A549 (cell line): ENCODE measurements at regions of chr1 and their contacts with region 1.

Region 1: GRCh38 chr1:156383023-156383422 is 14.0 kb downstream of the RHBG start:
- DNase-seq: peak; percentile 75 to 88
- ATAC-seq: peak; percentile 90 to 95
- H3K4me3 ChIP-seq: no peak overlapping the region
- H3K27ac ChIP-seq: 0 out of 6 replicates have a peak overlapping the region, but pooled peaks of 1 of the 2 experiments have one; percentile 47
- H3K4me1 ChIP-seq: peaks cover 8% of the 10 kb centered on the region
- CTCF ChIP-seq: peak; percentile 76
- EP300 ChIP-seq: no peak
- POLR2A ChIP-seq: no peak
- RAD21 ChIP-seq: peak; percentile 85 to 92

Region 2: GRCh38 chr1:156356875-156357534 is 26.0 kb before region 1 on chr1:
- CTCF ChIA-PET with region 1: interaction called, 399 read pairs
- POLR2A ChIA-PET with region 1: no interaction called
- DNase-seq: peak; percentile 63 to 83
- ATAC-seq: peak; percentile 93 to 94
- H3K4me3 ChIP-seq: no peak overlapping the region; the same call in 2 of the 3 replicates
- H3K27ac ChIP-seq: no peak overlapping the region; a peak in 1 of 6 replicates
- H3K4me1 ChIP-seq: no peaks in the 10 kb centered on the region; the same call in 2 of the 3 replicates
- CTCF ChIP-seq: peak; percentile 82
- EP300 ChIP-seq: no peak
- POLR2A ChIP-seq: no peak
- RAD21 ChIP-seq: peak; percentile 61 to 66

Region 3: DNA sequence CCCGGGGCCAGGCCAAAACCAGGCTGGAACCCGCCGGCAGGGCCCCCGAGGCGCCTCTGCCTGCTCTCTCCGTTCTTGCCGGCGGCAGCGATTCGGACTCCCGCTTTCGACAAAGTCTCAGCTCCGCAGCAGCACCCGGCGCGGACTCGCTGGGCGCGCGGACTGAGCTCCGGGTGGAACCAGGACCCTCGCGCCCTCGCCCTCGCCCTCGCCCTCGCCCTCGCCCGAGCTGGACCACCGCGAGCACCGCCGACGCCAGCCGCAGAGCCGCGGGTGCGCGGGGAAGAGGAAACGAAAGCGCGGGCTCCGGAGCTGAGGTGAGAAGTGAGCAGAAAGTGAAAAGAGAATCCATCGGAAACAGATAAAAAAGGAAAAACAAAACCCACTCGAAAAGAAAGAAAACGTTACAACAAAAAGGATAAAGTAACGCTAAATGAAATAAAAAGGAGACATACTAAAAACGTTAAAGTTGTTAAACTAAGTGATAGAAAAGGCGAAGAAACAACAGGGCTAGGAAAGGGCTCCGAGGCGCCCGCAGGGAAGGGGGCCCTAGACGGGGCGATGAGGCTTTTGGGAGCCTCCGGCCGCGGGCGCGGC is 52.6 kb after region 1 on chr1:
- CTCF ChIA-PET with region 1: interaction called, 166 read pairs
- POLR2A ChIA-PET with region 1: no interaction called
- DNase-seq: no peak
- ATAC-seq: no peak
- H3K4me3 ChIP-seq: peak overlapping the region; percentile 25; the same call in 2 of the 3 replicates
- H3K27ac ChIP-seq: peak overlapping the region in 1 of 2 experiments; percentile 26; a peak in 1 of 6 replicates
- H3K4me1 ChIP-seq: no peaks in the 10 kb centered on the region
- CTCF ChIP-seq: no peak
- EP300 ChIP-seq: no peak
- POLR2A ChIP-seq: no peak
- RAD21 ChIP-seq: no peak

Region 4: DNA sequence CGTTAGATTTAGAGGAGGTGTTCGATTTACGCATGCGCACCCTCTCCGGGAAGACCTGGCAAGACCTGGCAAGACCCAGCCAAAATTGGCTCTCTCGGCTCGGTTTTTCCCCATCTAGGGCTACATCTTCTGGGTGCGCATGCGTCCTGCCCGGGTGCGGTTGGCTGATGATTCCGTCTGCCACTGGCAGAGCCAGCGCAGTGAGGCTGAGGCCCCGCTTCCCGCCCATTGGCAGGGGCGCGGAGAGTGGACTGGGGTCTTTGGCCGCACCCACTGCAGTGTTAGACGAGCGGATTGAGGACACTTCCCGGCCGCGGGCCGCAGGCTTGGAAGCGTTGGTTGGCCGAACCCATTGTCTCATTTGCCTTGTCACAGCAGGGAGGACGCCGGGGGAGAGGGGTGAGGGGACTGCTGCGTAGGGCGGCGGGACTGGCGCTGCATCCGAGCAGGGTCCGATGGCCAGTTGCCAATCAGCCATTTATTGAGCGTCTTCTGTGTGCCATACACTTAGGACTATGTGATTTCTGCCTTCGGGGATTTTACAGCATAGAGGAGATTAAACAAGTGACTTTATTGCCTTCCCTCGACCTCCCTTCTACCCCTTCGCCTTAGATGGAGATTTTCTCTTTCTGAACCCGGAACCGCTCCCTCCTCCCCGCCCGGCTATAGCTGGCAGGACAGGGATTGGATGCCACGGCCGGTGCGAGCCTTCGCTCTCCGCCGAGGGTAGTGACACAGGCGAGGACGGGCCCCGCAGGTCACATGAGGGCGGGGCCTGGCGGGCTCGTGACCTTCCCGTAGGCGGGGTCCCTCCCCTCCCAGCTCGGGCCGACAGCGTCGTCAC is 73.8 kb after region 1 on chr1:
- CTCF ChIA-PET with region 1: interaction called, 42 read pairs
- POLR2A ChIA-PET with region 1: interaction called, 5 read pairs
- DNase-seq: peak; percentile 99
- ATAC-seq: peak; percentile 80 to 90
- H3K4me3 ChIP-seq: peak overlapping the region; percentile 60
- H3K27ac ChIP-seq: peak overlapping the region; percentile 97 to 98
- H3K4me1 ChIP-seq: peaks cover 13% of the 10 kb centered on the region
- CTCF ChIP-seq: no peak
- EP300 ChIP-seq: no peak
- POLR2A ChIP-seq: peak; percentile 89
- RAD21 ChIP-seq: no peak

Region 5: GRCh38 chr1:156601122-156601830 is 218.3 kb after region 1 on chr1 and contains the start of gene GPATCH4:
- CTCF ChIA-PET with region 1: interaction called, 11 read pairs
- POLR2A ChIA-PET with region 1: no interaction called
- DNase-seq: peak; percentile 89 to 92
- ATAC-seq: peak; percentile 86 to 87
- H3K4me3 ChIP-seq: peak within 1 kb of the TSS; percentile 77
- H3K27ac ChIP-seq: peak within 1 kb of the TSS; percentile 86 to 94
- H3K4me1 ChIP-seq: peaks cover 19% of the 10 kb centered on the region
- CTCF ChIP-seq: no peak
- EP300 ChIP-seq: no peak
- POLR2A ChIP-seq: peak; percentile 87
- RAD21 ChIP-seq: no peak
- polyA plus RNA-seq, gene GPATCH4: 68.1 and 76.1 TPM in 2 replicates